ENCODE measurements at regions of chr5 and their contacts with region 1.

Region 1: GRCh38 chr5:172932313-172933017 is 26.8 kb upstream of the RPL26L1 start:
- DNase-seq: peak; percentile 59 to 86 (median 75)
- ATAC-seq: peak; percentile 100
- H3K4me3 ChIP-seq: no peak overlapping the region
- H3K4me3 Mint-ChIP-seq: no peak overlapping the region
- H3K27ac ChIP-seq: no peak overlapping the region
- H3K27ac Mint-ChIP-seq: peak overlapping the region; percentile 67
- H3K4me1 ChIP-seq: no peaks in the 10 kb centered on the region
- H3K4me1 Mint-ChIP-seq: peaks cover 7% of the 10 kb centered on the region
- H3K27me3 ChIP-seq: no peaks in the 10 kb centered on the region
- H3K27me3 Mint-ChIP-seq: no peaks in the 10 kb centered on the region
- CTCF ChIP-seq: peak; percentile 97

Region 2: DNA sequence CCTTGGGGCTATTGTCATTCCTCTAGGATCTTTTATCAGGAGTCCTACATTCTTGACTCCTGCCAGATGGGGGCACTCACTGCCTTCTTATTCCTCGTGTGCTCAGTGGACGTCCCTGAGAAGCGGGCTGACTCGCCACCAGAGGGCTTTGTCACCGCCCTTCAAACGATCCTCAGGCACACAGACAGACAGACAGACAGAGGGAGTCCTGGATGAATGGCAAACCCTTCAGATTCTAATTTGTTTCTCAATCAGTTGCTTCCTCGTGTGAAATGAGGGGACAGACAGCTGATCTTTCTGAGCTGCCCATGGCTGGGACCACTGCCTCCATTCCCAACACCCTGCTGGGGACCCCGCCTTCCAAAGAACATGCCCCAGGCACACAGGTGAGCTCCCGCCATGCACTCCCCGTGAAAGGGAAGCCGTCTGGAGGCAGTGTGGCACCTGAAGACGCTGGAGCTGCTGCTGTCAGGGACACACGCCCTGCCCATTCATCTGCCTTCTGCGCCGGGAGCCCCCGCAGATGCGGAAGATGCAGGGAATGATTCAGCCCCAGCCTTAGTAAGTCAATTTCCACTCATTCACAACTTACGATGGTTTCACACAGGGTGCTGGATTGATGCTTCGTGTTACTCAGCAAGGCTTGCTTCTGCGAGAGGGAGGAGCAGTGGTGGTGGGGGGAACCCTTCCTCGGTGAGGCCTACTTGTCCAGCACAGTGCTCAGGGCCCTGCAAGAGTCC is 453.3 kb before region 1 on chr5:
- CTCF ChIA-PET with region 1: no interaction called
- POLR2A ChIA-PET with region 1: no interaction called
- intact Hi-C with region 1: loop called in 1 of 2 experiments (anchors 5 kb)
- DNase-seq: peak; percentile 18 to 79 (median 53)
- ATAC-seq: peak; percentile 87
- H3K4me3 ChIP-seq: no peak overlapping the region
- H3K4me3 Mint-ChIP-seq: no peak overlapping the region
- H3K27ac ChIP-seq: no peak overlapping the region
- H3K27ac Mint-ChIP-seq: no peak overlapping the region
- H3K4me1 ChIP-seq: no peaks in the 10 kb centered on the region
- H3K4me1 Mint-ChIP-seq: no peaks in the 10 kb centered on the region
- H3K27me3 ChIP-seq: no peaks in the 10 kb centered on the region
- H3K27me3 Mint-ChIP-seq: peaks cover 10% of the 10 kb centered on the region
- CTCF ChIP-seq: peak; percentile 47

Region 3: DNA sequence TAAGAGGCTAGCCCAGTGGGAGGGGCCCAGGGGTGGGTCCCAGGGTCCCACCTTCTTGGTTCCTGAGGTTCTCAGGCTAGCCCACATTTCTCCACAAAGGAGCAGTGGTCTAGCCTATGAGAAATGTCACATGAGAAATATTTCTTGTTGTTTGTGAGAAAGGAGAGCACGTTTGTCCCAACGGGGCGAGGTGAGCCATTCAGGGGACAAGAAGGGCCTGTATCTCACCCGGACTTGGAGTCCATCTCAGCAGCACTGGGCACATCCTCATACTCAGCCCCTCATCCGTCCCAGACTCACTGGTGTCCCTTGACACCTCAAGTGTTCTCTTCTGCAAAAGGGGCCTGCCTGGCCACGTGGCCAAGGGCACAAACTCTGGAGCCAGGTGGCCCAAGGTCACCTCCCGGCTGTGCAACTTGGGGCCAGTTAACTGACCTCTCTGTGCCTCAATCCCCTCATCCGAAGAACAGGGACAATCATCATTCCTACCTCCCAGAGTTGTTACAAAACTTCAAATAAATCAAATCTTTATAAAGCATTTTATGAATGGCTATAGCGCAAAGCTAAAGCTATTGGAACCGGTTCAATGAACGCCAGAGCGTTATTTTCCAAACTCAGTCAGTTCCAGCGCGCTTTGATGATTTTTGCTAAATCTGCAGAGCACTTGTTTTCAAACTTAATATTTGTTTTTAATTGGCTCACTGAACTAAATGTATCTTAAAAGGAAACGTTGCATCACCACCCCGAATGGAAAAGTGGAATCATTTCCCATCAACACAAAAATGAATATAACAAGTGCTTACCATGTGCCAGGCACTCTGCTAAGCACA is 210.9 kb before region 1 on chr5:
- CTCF ChIA-PET with region 1: interaction called, 92 read pairs
- POLR2A ChIA-PET with region 1: no interaction called
- intact Hi-C with region 1: loop called (anchors 1 kb)
- DNase-seq: peak in 1 of 9 experiments; percentile 21
- ATAC-seq: no peak
- H3K4me3 ChIP-seq: no peak overlapping the region
- H3K4me3 Mint-ChIP-seq: no peak overlapping the region
- H3K27ac ChIP-seq: no peak overlapping the region
- H3K27ac Mint-ChIP-seq: no peak overlapping the region
- H3K4me1 ChIP-seq: peaks cover 12% of the 10 kb centered on the region
- H3K4me1 Mint-ChIP-seq: peaks cover 23% of the 10 kb centered on the region
- H3K27me3 ChIP-seq: peaks cover 0 to 6% of the 10 kb centered on the region in 2 experiments
- H3K27me3 Mint-ChIP-seq: no peaks in the 10 kb centered on the region
- CTCF ChIP-seq: no peak

Region 4: GRCh38 chr5:172777881-172778814 is 154.3 kb before region 1 on chr5:
- CTCF ChIA-PET with region 1: interaction called, 75 read pairs
- POLR2A ChIA-PET with region 1: no interaction called
- intact Hi-C with region 1: loop called in 1 of 2 experiments (anchors 2 kb)
- DNase-seq: peak in 1 of 9 experiments; percentile 47
- ATAC-seq: peak; percentile 52
- H3K4me3 ChIP-seq: peak overlapping the region; percentile 18 to 22
- H3K4me3 Mint-ChIP-seq: peak overlapping the region; percentile 59
- H3K27ac ChIP-seq: peak overlapping the region; percentile 82 to 95
- H3K27ac Mint-ChIP-seq: peak overlapping the region; percentile 94
- H3K4me1 ChIP-seq: peaks cover 23% of the 10 kb centered on the region
- H3K4me1 Mint-ChIP-seq: peaks cover 38% of the 10 kb centered on the region
- H3K27me3 ChIP-seq: no peaks in the 10 kb centered on the region
- H3K27me3 Mint-ChIP-seq: no peaks in the 10 kb centered on the region
- CTCF ChIP-seq: no peak

Region 5: GRCh38 chr5:172897481-172898217 is 34.8 kb before region 1 on chr5:
- CTCF ChIA-PET with region 1: interaction called, 11 read pairs
- POLR2A ChIA-PET with region 1: no interaction called
- intact Hi-C with region 1: no loop called
- DNase-seq: no peak
- ATAC-seq: no peak
- H3K4me3 ChIP-seq: no peak overlapping the region
- H3K4me3 Mint-ChIP-seq: no peak overlapping the region
- H3K27ac ChIP-seq: peak overlapping the region in 1 of 2 experiments; percentile 10
- H3K27ac Mint-ChIP-seq: no peak overlapping the region
- H3K4me1 ChIP-seq: peaks cover 10% of the 10 kb centered on the region
- H3K4me1 Mint-ChIP-seq: no peaks in the 10 kb centered on the region
- H3K27me3 ChIP-seq: no peaks in the 10 kb centered on the region
- H3K27me3 Mint-ChIP-seq: no peaks in the 10 kb centered on the region
- CTCF ChIP-seq: no peak

Region 6: GRCh38 chr5:173035904-173036707 is 103.6 kb after region 1 on chr5:
- CTCF ChIA-PET with region 1: no interaction called
- POLR2A ChIA-PET with region 1: no interaction called
- intact Hi-C with region 1: no loop called
- DNase-seq: peak in 1 of 9 experiments; percentile 23
- ATAC-seq: no peak
- H3K4me3 ChIP-seq: peak overlapping the region in 1 of 2 experiments; percentile 19
- H3K4me3 Mint-ChIP-seq: peak overlapping the region; percentile 78
- H3K27ac ChIP-seq: peak overlapping the region; percentile 32 to 83
- H3K27ac Mint-ChIP-seq: peak overlapping the region; percentile 95
- H3K4me1 ChIP-seq: peaks cover 40% of the 10 kb centered on the region
- H3K4me1 Mint-ChIP-seq: peaks cover 67% of the 10 kb centered on the region
- H3K27me3 ChIP-seq: no peaks in the 10 kb centered on the region
- H3K27me3 Mint-ChIP-seq: no peaks in the 10 kb centered on the region
- CTCF ChIP-seq: no peak

Region 7: GRCh38 chr5:173108914-173109313 is 176.4 kb after region 1 on chr5:
- CTCF ChIA-PET with region 1: no interaction called
- POLR2A ChIA-PET with region 1: no interaction called
- intact Hi-C with region 1: no loop called
- DNase-seq: no peak
- ATAC-seq: no peak
- H3K4me3 ChIP-seq: no peak overlapping the region
- H3K4me3 Mint-ChIP-seq: no peak overlapping the region
- H3K27ac ChIP-seq: no peak overlapping the region
- H3K27ac Mint-ChIP-seq: peak overlapping the region; percentile 33
- H3K4me1 ChIP-seq: no peaks in the 10 kb centered on the region
- H3K4me1 Mint-ChIP-seq: peaks cover 12% of the 10 kb centered on the region
- H3K27me3 ChIP-seq: no peaks in the 10 kb centered on the region
- H3K27me3 Mint-ChIP-seq: no peaks in the 10 kb centered on the region
- CTCF ChIP-seq: no peak

Region 8: DNA sequence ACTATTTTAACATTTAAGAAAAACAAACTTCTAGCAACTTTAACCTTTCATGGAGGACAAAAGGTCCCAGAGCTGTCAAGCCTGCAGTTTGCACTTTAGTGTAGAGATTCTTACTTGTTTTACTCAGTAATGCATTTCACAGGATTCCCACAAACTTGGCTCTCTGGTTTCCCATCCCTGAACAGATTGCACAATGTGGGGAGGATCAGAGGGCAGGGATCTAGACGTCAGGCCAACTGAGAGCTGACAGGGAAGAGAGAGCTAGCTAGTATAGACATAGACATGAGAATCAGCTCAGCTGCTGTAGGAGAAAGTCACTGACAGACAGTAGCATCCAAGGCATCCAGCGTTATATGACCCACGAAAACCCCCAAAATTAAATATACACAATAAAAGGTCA is 191.0 kb after region 1 on chr5:
- CTCF ChIA-PET with region 1: no interaction called
- POLR2A ChIA-PET with region 1: no interaction called
- intact Hi-C with region 1: no loop called
- DNase-seq: no peak
- ATAC-seq: no peak
- H3K4me3 ChIP-seq: no peak overlapping the region
- H3K4me3 Mint-ChIP-seq: no peak overlapping the region
- H3K27ac ChIP-seq: no peak overlapping the region
- H3K27ac Mint-ChIP-seq: no peak overlapping the region
- H3K4me1 ChIP-seq: no peaks in the 10 kb centered on the region
- H3K4me1 Mint-ChIP-seq: peaks cover 2% of the 10 kb centered on the region
- H3K27me3 ChIP-seq: no peaks in the 10 kb centered on the region
- H3K27me3 Mint-ChIP-seq: no peaks in the 10 kb centered on the region
- CTCF ChIP-seq: no peak

Measured in CD8-positive, alpha-beta T cell (primary cell).